ENCODE measurements at regions of chr21 and their contacts with region 1.

Region 1: GRCh38 chr21:33947451-33948095 is 32.0 kb upstream of the ATP5PO start:
- DNase-seq: peak; percentile 76 to 93
- H3K4me3 ChIP-seq: peak overlapping the region; percentile 4 to 14
- H3K27ac ChIP-seq: peak overlapping the region; percentile 87 to 92
- H3K4me1 ChIP-seq: peaks cover 0 to 14% of the 10 kb centered on the region in 2 donors
- H3K27me3 ChIP-seq: no peaks in the 10 kb centered on the region
- CTCF ChIP-seq: peak in 1 of 4 experiments; percentile 2
- POLR2A ChIP-seq: no peak

Region 2: GRCh38 chr21:34073032-34073869 is 125.7 kb after region 1 on chr21 and contains the starts of genes MRPS6 and SLC5A3:
- intact Hi-C with region 1: loop called (anchors 10 kb)
- DNase-seq: peak; percentile 81 to 82
- H3K4me3 ChIP-seq: peak within 1 kb of the TSS; percentile 65 to 92
- H3K27ac ChIP-seq: peak within 1 kb of the TSS; percentile 93 to 99
- H3K4me1 ChIP-seq: peaks cover 0 to 25% of the 10 kb centered on the region in 2 donors
- H3K27me3 ChIP-seq: no peaks in the 10 kb centered on the region
- CTCF ChIP-seq: no peak
- POLR2A ChIP-seq: peak; percentile 77 to 88
- total RNA-seq, gene MRPS6: 9.0 to 75.6 (median 33.5) TPM
- total RNA-seq, gene SLC5A3: 10.2 to 76.2 (median 17.1) TPM